Right cardiac atrium (tissue), 5 donors: ENCODE measurements at regions of chr1 and their contacts with region 1.

Region 1: DNA sequence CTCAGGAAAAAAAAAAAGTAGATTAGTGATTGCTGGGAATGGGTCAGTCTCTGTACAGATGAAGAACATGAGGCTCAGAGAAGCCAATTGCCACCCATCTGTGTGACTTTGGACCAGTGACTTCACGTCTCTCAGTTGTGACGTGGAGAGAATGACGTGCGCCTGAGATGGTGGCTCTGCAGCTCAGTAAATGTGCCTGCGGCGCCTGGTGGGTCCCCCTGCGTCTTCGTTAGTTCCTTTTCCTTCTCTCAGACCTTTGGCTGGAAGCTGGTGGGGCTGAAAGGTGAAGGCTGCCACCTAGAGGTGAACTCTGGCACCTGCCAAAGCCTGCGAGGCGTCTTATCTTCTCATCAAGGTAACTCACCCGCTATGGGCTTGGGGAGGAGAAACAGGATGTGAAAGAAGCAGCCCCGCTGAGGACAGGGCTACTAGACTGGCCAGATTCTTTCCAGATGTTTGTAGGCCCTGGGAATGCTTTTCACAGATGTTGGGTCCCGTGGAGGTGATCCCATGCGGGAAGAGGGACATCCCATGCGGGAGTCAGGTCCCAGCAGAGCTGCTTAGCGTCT is 8.7 kb upstream of the E2F2 start:
- DNase-seq: peak; percentile 82 to 92 (median 91)
- ATAC-seq: peak; percentile 87 to 89
- H3K4me3 ChIP-seq: no peak overlapping the region
- H3K27ac ChIP-seq: no peak overlapping the region
- H3K4me1 ChIP-seq: no peaks in the 10 kb centered on the region
- H3K27me3 ChIP-seq: no peaks in the 10 kb centered on the region

Region 2: DNA sequence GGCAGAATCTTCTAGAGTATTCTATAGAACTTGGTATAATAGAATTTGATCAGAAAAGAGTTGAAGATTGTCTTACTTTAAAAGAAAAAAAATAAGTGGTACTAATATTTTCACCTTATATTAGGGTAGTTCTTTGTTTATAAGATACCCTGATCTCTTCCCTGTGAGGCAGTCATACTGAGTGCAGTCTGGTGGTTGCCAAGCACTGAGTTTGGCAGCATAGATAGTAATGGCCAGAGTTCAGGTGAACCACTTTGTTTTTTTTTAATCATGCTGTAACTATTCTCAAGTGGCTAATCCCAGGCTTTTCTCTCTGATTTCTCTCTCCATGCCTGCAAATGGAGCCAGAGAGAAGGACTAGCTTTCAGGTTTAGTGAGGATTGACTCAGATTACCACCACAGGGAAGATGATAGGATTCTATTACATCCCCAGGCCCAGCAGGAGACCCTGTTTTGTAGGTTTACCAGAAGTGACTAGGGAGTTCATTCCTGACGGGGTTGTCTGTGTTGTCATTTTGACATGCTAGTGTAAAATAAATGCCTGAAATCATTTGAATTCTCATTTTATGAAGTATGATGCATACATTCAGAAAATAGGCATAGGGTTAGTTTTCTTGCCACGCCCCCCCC is 503.8 kb before region 1 on chr1:
- intact Hi-C with region 1: no loop called
- DNase-seq: no peak
- ATAC-seq: no peak
- H3K4me3 ChIP-seq: no peak overlapping the region
- H3K27ac ChIP-seq: no peak overlapping the region
- H3K4me1 ChIP-seq: no peaks in the 10 kb centered on the region
- H3K27me3 ChIP-seq: no peaks in the 10 kb centered on the region

Region 3: DNA sequence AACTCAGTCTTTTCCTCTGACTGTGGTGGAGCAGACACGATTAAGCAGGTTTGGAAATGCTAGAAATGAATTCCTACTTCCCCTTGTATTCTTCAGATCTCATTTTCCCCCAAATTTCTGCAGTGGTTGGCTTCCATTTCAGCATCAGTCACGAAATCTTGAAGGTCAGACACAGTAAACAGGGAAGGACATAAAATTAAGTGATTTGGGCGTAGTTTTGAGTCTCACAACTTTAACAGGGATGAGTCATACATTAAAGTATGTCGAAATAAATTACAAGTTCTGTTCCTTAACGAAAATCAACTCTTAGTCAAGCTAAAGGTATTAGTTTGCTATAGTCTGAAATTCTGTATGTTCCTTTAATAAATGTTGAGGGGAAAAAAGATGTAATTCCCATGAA is 256.8 kb before region 1 on chr1:
- intact Hi-C with region 1: loop called in 1 of 4 experiments (anchors 10 kb)
- DNase-seq: no peak
- ATAC-seq: no peak
- H3K4me3 ChIP-seq: no peak overlapping the region
- H3K27ac ChIP-seq: no peak overlapping the region
- H3K4me1 ChIP-seq: no peaks in the 10 kb centered on the region
- H3K27me3 ChIP-seq: no peaks in the 10 kb centered on the region

Region 4: DNA sequence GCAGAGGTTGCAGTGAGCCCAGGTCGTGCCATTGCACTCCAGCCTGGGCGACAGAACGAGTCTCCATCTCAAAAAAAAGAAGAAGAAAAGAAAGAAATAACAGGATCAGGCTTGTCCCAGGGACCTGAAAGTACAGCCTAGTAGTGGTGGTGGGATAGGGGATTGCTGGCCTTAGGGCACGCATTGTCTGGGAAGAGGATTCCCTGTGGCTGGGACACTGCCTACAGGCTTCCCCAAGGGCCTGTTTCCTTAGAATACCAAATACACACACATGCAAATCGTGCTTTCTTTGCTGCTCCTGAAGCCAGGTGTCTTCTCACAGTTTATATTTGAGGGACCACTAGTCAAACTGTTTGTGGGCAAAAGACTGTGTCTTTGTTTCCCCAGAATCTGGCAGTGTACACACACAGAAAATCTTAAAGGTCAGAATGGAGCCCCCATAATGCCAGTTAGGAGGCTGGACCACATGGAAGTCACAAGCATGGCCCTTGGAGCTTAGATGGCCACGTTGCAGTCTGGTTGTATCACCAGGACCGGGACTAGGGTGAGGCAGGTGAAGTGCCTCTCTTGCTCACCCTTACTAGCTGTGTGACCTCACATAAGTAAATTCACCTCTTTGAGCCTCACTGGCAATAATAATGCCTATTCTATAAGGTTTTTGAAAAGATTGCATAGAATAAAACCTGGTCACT is 43.1 kb before region 1 on chr1:
- intact Hi-C with region 1: loop called (anchors 1 to 5 kb)
- DNase-seq: no peak
- ATAC-seq: peak in 1 of 2 donors; percentile 16
- H3K4me3 ChIP-seq: no peak overlapping the region
- H3K27ac ChIP-seq: no peak overlapping the region
- H3K4me1 ChIP-seq: no peaks in the 10 kb centered on the region
- H3K27me3 ChIP-seq: no peaks in the 10 kb centered on the region

Region 5: DNA sequence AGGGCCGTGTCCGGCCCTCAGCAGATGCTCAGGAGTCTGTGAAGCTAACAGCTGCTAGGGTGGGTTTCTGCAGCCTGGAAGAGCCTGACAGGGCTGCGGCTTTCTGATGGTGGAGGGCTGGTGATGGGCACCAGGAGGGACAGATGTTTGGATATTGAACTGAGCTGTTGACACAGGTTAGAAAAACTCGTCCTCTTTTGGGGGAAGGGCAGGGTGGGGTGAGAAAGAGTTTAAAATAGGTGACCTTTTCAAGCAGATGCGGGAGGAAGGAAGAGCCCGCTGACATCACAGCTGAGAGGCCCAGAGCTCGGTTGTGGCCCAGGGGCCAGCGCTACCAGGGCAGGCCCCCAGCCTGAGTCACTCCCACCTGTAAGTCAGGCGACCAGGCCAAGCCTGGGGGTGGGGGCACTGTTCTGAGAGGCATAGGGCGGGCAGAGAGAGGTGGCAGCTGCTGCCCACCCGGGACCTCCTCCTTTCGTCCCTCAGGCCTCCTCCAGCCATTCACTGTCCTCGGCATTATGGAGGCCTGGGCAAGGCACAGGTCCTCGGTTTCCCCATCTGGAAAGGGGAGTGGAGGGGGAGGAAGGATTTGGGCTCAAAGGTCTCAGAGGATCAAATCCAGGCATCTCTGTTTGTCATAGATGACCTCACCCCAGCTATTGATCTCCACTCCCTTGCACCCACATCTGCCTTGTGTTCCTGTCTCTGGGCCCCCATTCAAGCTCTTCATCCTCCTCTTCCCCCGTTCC is 51.9 kb after region 1 on chr1:
- intact Hi-C with region 1: loop called in 1 of 4 experiments (anchors 10 kb)
- DNase-seq: no peak
- ATAC-seq: peak in 1 of 2 donors; percentile 74
- H3K4me3 ChIP-seq: no peak overlapping the region
- H3K27ac ChIP-seq: no peak overlapping the region
- H3K4me1 ChIP-seq: peaks cover 7% of the 10 kb centered on the region
- H3K27me3 ChIP-seq: no peaks in the 10 kb centered on the region

Region 6: GRCh38 chr1:23634842-23635651 is 95.3 kb after region 1 on chr1:
- intact Hi-C with region 1: loop called in 3 of 4 experiments (anchors 2 kb)
- DNase-seq: peak; percentile 76 to 87 (median 82)
- ATAC-seq: peak; percentile 65 to 74
- H3K4me3 ChIP-seq: peak overlapping the region; percentile 43
- H3K27ac ChIP-seq: peak overlapping the region; percentile 88
- H3K4me1 ChIP-seq: peaks cover 3% of the 10 kb centered on the region
- H3K27me3 ChIP-seq: no peaks in the 10 kb centered on the region